ENCODE measurements at regions of chr9 and their contacts with region 1.

Region 1: DNA sequence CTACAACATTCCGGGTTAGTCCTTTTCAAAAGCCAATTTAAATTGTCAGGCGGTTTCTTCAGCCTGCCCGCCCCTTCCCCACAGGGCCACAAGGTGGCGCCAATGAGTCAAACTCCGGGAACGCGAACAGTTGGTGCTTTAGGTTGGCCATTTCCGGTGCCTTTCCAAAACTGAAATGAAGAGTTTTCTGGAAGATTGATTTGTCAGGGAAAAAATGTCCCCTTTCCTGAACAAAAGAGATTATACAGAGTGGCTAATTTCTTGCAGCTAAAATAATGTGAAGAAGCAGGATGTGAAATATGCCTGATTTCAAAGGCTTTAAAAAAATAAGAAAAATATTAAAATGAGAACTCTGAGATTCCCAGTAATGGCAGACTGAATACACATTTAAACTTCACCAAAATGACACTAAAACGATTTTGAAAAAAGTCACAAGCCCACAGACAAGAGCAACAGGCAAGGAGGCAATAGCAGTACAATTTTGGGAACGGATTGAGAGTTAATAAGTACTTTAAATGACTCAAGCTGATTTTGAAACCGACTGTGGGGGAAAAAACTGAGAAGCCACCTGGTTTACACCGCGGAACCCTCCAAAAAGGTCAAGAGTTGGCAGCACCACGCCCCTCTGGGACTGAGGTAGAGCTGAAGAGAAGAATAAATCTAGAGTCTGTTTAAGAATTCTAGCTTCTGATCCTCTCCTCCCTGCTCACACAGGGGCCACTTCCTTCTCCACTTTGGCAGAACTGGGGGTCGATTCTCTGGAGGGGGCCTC is 45.7 kb downstream of the SLC46A2 start:
- DNase-seq: peak in 1 of 2 donors; percentile 86
- H3K4me3 ChIP-seq: no peak overlapping the region
- H3K27ac ChIP-seq: no peak overlapping the region
- H3K4me1 ChIP-seq: no peaks in the 10 kb centered on the region
- H3K27me3 ChIP-seq: no peaks in the 10 kb centered on the region
- CTCF ChIP-seq: peak; percentile 80 to 97 (median 97)

Region 2: DNA sequence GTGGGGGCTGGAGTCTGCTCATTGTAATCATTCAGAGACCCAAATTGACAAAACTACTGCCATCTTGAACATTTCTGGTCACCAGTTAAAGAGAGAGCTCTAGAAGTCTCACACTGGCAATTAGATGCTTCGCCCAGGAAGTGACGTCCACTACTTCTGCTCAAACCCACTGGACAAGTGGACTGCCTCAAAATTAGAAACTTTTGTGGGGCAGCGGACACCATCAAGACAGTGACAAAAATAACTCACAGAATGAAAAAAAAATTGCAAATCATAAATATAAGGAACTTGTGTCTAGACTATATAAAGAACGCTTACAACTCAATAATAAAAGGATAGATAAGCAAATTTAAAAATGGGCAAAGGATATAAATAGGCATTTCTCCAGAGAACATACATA is 55.5 kb after region 1 on chr9:
- intact Hi-C with region 1: loop called (anchors 5 kb)
- DNase-seq: no peak
- H3K4me3 ChIP-seq: no peak overlapping the region
- H3K27ac ChIP-seq: no peak overlapping the region
- H3K4me1 ChIP-seq: no peaks in the 10 kb centered on the region
- H3K27me3 ChIP-seq: no peaks in the 10 kb centered on the region
- CTCF ChIP-seq: no peak

Region 3: GRCh38 chr9:113056191-113057106 is 211.5 kb after region 1 on chr9 and contains the start of gene ZFP37:
- intact Hi-C with region 1: loop called (anchors 10 kb)
- DNase-seq: peak; percentile 77 to 97
- H3K4me3 ChIP-seq: peak within 1 kb of the TSS; percentile 69 to 77
- H3K27ac ChIP-seq: peak within 1 kb of the TSS; percentile 62 to 84
- H3K4me1 ChIP-seq: no peaks in the 10 kb centered on the region
- H3K27me3 ChIP-seq: peaks cover 2% of the 10 kb centered on the region
- CTCF ChIP-seq: no peak
- total RNA-seq, gene ZFP37: 3.3 TPM

Measured in ascending aorta (tissue), 2 donors.